GM10248 (cell line): ENCODE measurements at regions of chr12 and their contacts with region 1.

Region 1: GRCh38 chr12:59834659-59835474 is 239.0 kb downstream of the SLC16A7 start:
- DNase-seq: peak; percentile 10
- CTCF ChIP-seq: peak; percentile 43

Region 2: DNA sequence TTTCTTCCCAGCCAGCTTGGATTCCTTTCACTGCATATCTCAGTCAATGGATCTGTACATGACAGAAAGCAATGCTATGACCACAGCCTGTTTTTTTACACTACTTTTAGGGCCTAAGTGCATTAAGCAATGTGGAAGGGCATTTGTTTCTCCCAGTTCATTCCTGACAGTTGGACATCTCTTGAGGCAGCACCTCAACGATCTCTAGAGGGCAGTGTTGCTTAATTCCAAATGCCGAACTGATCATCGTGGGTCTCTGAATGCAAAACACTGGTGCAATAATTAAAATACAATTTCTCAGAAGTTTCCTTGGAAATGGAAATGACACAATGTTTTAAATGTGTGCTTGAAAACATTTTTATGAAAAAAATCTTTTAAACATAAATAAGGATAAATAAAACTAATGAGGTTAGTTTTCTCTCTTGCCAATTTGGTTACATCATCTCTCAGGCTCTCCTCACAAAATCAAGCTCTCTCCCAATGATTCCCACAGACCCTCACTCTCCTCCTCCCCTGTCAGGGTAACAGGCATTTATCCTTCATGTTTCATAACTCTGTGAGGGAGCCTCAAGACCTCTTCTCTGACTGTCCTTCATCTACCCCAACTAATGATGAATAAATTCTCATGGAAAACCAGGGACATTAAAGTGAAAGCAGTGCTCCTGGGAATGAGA is 431.5 kb before region 1 on chr12:
- CTCF ChIA-PET with region 1: interaction called, 14 read pairs
- POLR2A ChIA-PET with region 1: no interaction called
- DNase-seq: peak; percentile 9
- CTCF ChIP-seq: peak; percentile 77

Region 3: GRCh38 chr12:59444932-59445331 is 389.9 kb before region 1 on chr12:
- CTCF ChIA-PET with region 1: interaction called, 10 read pairs
- POLR2A ChIA-PET with region 1: no interaction called
- DNase-seq: no peak
- CTCF ChIP-seq: peak; percentile 23

Region 4: DNA sequence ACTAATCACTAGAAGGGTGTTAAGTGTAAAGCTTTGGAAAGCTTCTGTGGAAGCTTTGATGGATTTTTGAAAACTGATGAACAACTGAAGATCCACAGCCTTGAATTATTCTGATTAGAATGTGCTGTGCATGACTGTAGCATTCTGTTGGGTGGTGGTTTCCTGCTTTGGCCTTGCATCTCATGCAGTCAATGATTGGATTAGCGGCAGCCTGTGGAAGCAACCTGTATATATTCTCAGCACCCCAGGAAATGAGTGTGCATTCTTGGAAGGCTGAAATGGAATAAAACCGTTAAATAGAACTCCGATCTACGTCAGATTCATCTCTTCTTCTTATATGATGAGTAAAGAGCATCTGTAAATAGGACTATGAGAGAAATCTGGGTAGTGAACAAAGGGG is 118.8 kb before region 1 on chr12:
- CTCF ChIA-PET with region 1: no interaction called
- POLR2A ChIA-PET with region 1: no interaction called
- DNase-seq: no peak
- CTCF ChIP-seq: no peak